H1 (cell line): ENCODE measurements at regions of chr17 and their contacts with region 1.

Region 1: DNA sequence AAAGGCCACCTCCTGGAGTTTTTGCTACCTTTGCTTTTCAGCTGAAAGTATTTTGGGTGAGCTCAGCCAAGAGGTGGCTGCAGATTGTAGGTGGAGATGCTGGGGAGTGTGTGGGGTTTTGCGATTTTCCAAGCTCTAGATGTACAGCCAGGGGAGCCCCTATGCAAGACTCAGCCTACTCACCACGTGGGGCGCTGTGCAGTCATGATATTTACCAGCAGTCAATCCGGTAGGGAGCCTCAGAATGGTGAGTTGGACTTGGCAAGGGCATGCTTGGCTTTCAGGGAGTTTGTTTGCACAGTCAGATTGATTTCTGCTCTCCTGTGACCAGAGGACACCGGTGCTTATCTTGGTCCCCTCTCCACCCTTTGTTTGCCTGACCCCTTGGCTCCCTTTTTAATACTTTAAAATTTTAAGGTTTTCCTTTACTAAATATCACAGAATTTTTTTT is 175.3 kb downstream of the UTP18 start:
- DNase-seq: peak; percentile 7 to 72
- H3K4me3 ChIP-seq: no peak overlapping the region
- H3K27ac ChIP-seq: no peak overlapping the region
- H3K4me1 ChIP-seq: peaks cover 0 to 3% (median 0%) of the 10 kb centered on the region in 4 experiments; a peak in 2 of 7 replicates
- H3K27me3 ChIP-seq: no peaks in the 10 kb centered on the region
- CTCF ChIP-seq: peak; percentile 78 to 81 (median 80)
- EP300 ChIP-seq: no peak
- POLR2A ChIP-seq: no peak
- RAD21 ChIP-seq: peak; percentile 48 to 52

Region 2: DNA sequence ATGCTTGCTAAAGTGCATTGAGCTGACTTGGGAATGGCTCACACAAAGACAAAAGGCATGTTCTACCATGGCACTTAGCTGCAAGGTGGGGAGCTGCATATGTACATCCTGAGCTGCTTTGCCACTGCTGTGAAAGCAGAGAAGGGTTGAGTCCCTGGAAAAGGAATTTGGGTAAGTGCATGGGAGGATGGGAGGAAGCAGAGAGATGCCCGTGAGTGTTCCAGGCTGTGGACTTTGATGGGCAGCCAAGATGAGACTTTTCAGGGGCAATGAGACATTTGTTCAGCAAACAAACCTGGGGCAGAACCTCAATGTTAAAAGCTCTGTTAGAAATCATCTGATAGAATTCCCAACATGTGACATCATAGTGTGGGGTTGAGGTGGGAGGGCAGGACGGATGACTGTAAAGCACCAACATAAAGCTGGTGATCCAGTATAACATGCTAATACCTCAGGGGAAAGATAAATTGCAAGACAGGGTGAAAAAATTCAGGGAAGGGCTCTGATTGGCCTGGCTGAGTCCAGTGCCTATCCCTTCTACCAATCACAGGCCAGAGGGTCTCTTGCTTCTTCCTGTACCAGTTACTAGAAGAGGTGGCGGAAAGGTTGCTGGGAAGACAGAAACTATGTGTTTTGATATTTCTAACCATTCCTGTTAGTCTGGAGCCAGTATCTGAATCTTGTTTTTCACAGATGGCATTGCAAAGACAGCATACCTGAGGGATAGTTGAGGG is 12.1 kb before region 1 on chr17:
- CTCF ChIA-PET with region 1: interaction called, 21 read pairs
- POLR2A ChIA-PET with region 1: no interaction called
- DNase-seq: no peak
- H3K4me3 ChIP-seq: no peak overlapping the region
- H3K27ac ChIP-seq: no peak overlapping the region
- H3K4me1 ChIP-seq: peaks cover 0 to 3% (median 1%) of the 10 kb centered on the region in 4 experiments; a peak in 3 of 7 replicates
- H3K27me3 ChIP-seq: no peaks in the 10 kb centered on the region
- CTCF ChIP-seq: no peak
- EP300 ChIP-seq: no peak
- POLR2A ChIP-seq: no peak
- RAD21 ChIP-seq: no peak

Region 3: GRCh38 chr17:51445946-51446533 is 10.4 kb after region 1 on chr17:
- CTCF ChIA-PET with region 1: interaction called, 10 read pairs
- POLR2A ChIA-PET with region 1: no interaction called
- DNase-seq: no peak
- H3K4me3 ChIP-seq: no peak overlapping the region
- H3K27ac ChIP-seq: no peak overlapping the region
- H3K4me1 ChIP-seq: no peaks in the 10 kb centered on the region
- H3K27me3 ChIP-seq: no peaks in the 10 kb centered on the region
- CTCF ChIP-seq: no peak
- EP300 ChIP-seq: no peak
- POLR2A ChIP-seq: no peak
- RAD21 ChIP-seq: no peak